ENCODE measurements at regions of chr12 and their contacts with region 1.

Region 1: GRCh38 chr12:89225808-89226411 is 126.4 kb downstream of the DUSP6 start:
- DNase-seq: peak; percentile 75
- H3K4me3 Mint-ChIP-seq: peak overlapping the region; percentile 58
- H3K27ac Mint-ChIP-seq: peak overlapping the region; percentile 95
- H3K4me1 Mint-ChIP-seq: peaks cover 67% of the 10 kb centered on the region
- H3K27me3 Mint-ChIP-seq: no peaks in the 10 kb centered on the region

Region 2: DNA sequence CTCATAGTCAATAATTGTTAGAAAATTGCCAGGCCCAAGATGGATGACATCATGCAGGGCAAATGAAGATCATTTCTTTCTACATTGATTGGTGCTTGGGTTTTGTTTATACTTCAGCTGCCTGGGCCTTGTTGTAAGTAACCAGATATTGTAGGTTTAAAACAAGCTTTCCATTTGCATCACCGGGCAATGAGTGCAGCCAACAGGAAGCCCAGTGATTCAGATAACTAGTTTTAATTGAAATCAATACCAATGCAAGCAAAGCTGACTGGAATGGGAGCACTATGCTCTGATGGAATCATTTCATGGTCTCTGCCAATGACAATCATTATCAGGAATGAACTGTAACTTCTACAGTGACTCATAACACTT is 152.9 kb before region 1 on chr12:
- intact Hi-C with region 1: loop called (anchors 5 kb)
- DNase-seq: no peak
- H3K4me3 Mint-ChIP-seq: no peak overlapping the region
- H3K27ac Mint-ChIP-seq: peak overlapping the region; percentile 31
- H3K4me1 Mint-ChIP-seq: peaks cover 20% of the 10 kb centered on the region
- H3K27me3 Mint-ChIP-seq: no peaks in the 10 kb centered on the region

Region 3: DNA sequence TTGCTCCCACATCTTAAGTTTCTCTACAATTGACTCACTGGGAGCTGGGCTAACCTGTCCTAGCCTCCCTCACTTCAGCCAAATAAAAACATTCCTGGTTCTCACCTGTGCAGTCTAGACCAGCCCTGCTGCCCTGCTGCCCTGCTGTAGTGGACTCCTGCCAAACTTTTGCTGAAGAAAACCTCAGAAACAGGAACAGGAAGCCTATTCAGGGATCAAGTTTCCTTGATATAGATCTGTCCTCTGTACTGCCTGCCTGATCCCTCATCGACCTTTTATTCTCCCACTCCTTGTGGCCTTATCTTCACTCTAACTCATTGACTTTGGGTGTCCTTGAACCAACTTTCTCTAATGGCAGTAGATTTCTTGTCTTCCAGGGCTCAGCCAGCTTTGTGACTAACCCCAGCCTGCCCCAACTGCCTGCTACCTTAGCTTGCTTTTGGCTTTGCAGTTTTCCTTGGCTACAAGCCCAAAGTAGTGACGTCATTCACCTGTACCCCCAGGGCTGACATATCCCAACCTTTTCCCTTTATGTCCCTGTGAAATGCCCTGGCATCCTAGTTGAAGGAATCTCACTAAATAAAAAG is 108.4 kb before region 1 on chr12:
- intact Hi-C with region 1: no loop called
- DNase-seq: no peak
- H3K4me3 Mint-ChIP-seq: no peak overlapping the region
- H3K27ac Mint-ChIP-seq: no peak overlapping the region
- H3K4me1 Mint-ChIP-seq: peaks cover 7% of the 10 kb centered on the region
- H3K27me3 Mint-ChIP-seq: peaks cover 2% of the 10 kb centered on the region

Region 4: GRCh38 chr12:89244536-89244935 is 18.6 kb after region 1 on chr12:
- intact Hi-C with region 1: loop called (anchors 1 kb)
- DNase-seq: peak; percentile 82
- H3K4me3 Mint-ChIP-seq: peak overlapping the region; percentile 52
- H3K27ac Mint-ChIP-seq: peak overlapping the region; percentile 84
- H3K4me1 Mint-ChIP-seq: peaks cover 45% of the 10 kb centered on the region
- H3K27me3 Mint-ChIP-seq: no peaks in the 10 kb centered on the region

Region 5: GRCh38 chr12:89345830-89346740 is 120.2 kb after region 1 on chr12:
- intact Hi-C with region 1: loop called (anchors 1 kb)
- DNase-seq: peak; percentile 83
- H3K4me3 Mint-ChIP-seq: peak overlapping the region; percentile 98
- H3K27ac Mint-ChIP-seq: peak overlapping the region; percentile 90
- H3K4me1 Mint-ChIP-seq: peaks cover 56% of the 10 kb centered on the region
- H3K27me3 Mint-ChIP-seq: no peaks in the 10 kb centered on the region

Region 6: GRCh38 chr12:89524541-89525285 is 298.8 kb after region 1 on chr12 and contains the start of gene GALNT4:
- intact Hi-C with region 1: loop called (anchors 2 kb)
- DNase-seq: peak; percentile 94
- H3K4me3 Mint-ChIP-seq: peak within 1 kb of the TSS; percentile 98
- H3K27ac Mint-ChIP-seq: peak within 1 kb of the TSS; percentile 99
- H3K4me1 Mint-ChIP-seq: peaks cover 49% of the 10 kb centered on the region
- H3K27me3 Mint-ChIP-seq: no peaks in the 10 kb centered on the region
- total RNA-seq, gene GALNT4: 6.9 and 7.6 TPM in 2 replicates

Measured in activated CD4-positive, alpha-beta T cell treated with anti-CD3 and anti-CD28 coated beads, Interleukin-2, amount 10 ng/mL, durations not matched to agents 24 days and 14 days (primary cell).